Lower lobe of right lung (tissue), 2 donors: ENCODE measurements at regions of chr14 and their contacts with region 1.

Region 1: DNA sequence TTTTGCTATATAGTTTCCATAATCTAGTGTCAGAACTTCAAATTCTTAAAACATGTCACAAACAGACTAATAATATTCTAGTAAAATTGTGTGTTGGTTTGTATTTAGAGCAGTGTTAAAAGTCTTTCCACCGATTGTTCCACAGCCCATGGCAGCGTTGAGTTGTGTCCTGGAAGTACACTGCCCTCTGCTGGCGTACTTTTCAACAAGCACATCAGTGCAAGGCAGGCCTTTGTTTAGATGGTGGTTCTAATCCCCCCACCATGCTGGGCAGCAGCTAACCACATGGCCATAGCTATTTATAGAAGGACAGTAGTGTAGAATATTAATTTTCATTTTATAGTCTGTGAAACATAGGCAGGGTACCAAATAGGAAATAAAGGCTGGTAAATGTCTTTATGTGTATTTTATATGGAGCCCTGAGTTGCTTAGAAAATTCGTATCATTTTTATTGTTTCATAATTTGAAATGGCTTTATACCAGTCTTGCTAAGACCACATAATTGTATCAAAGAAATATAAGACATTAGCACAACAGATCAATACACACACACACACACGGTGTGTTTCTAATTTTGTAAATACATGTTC is 235.4 kb downstream of the SEC23A start:
- DNase-seq: peak; percentile 63
- ATAC-seq: peak; percentile 91 to 93
- H3K4me3 ChIP-seq: no peak overlapping the region
- H3K27ac ChIP-seq: no peak overlapping the region
- H3K4me1 ChIP-seq: peaks cover 21% of the 10 kb centered on the region
- H3K27me3 ChIP-seq: no peaks in the 10 kb centered on the region
- CTCF ChIP-seq: peak; percentile 80

Region 2: GRCh38 chr14:38721822-38722431 is 145.7 kb before region 1 on chr14:
- intact Hi-C with region 1: loop called (anchors 5 kb)
- DNase-seq: no peak
- ATAC-seq: peak; percentile 86 to 89
- H3K4me3 ChIP-seq: no peak overlapping the region
- H3K27ac ChIP-seq: no peak overlapping the region
- H3K4me1 ChIP-seq: peaks cover 7% of the 10 kb centered on the region
- H3K27me3 ChIP-seq: no peaks in the 10 kb centered on the region
- CTCF ChIP-seq: peak; percentile 80

Region 3: GRCh38 chr14:38790916-38791315 is 76.7 kb before region 1 on chr14:
- intact Hi-C with region 1: no loop called
- DNase-seq: no peak
- ATAC-seq: no peak
- H3K4me3 ChIP-seq: no peak overlapping the region
- H3K27ac ChIP-seq: no peak overlapping the region
- H3K4me1 ChIP-seq: no peaks in the 10 kb centered on the region
- H3K27me3 ChIP-seq: no peaks in the 10 kb centered on the region
- CTCF ChIP-seq: no peak

Region 4: GRCh38 chr14:39050389-39050788 is 182.7 kb after region 1 on chr14:
- intact Hi-C with region 1: no loop called
- DNase-seq: no peak
- ATAC-seq: no peak
- H3K4me3 ChIP-seq: no peak overlapping the region
- H3K27ac ChIP-seq: no peak overlapping the region
- H3K4me1 ChIP-seq: no peaks in the 10 kb centered on the region
- H3K27me3 ChIP-seq: no peaks in the 10 kb centered on the region
- CTCF ChIP-seq: no peak